Posterior cingulate gyrus (tissue), 11 donors: ENCODE measurements at regions of chr14 and their contacts with region 1.

Region 1: GRCh38 chr14:102235275-102235897 is 69.6 kb downstream of the MOK start:
- DNase-seq: peak in 8 of 10 donors; percentile 30 to 95 (median 70)

Region 2: GRCh38 chr14:101354726-101355125 is 880.7 kb before region 1 on chr14:
- intact Hi-C with region 1: no loop called
- DNase-seq: no peak

Region 3: GRCh38 chr14:102509744-102510615 is 274.6 kb after region 1 on chr14 and contains the start of gene ANKRD9:
- intact Hi-C with region 1: loop called (anchors 10 kb)
- DNase-seq: peak; percentile 76 to 98 (median 89)